ENCODE measurements at regions of chr11 and their contacts with region 1.

Region 1: GRCh38 chr11:118171269-118172062 is 5.0 kb downstream of the SCN2B start:
- DNase-seq: no peak
- H3K4me3 ChIP-seq: no peak overlapping the region
- H3K27me3 ChIP-seq: peaks cover 20% of the 10 kb centered on the region
- CTCF ChIP-seq: peak; percentile 93

Region 2: GRCh38 chr11:118145285-118146227 is 25.9 kb before region 1 on chr11:
- CTCF ChIA-PET with region 1: interaction called, 161 read pairs
- POLR2A ChIA-PET with region 1: interaction called, 4 read pairs
- DNase-seq: no peak
- H3K4me3 ChIP-seq: peak overlapping the region; percentile 36
- H3K27me3 ChIP-seq: peaks cover 26% of the 10 kb centered on the region
- CTCF ChIP-seq: peak; percentile 88

Region 3: GRCh38 chr11:118152552-118153471 is 18.7 kb before region 1 on chr11 and contains the start of gene SCN4B:
- CTCF ChIA-PET with region 1: interaction called, 161 read pairs
- POLR2A ChIA-PET with region 1: no interaction called
- DNase-seq: no peak
- H3K4me3 ChIP-seq: peak within 1 kb of the TSS; percentile 36
- H3K27me3 ChIP-seq: peaks cover 70% of the 10 kb centered on the region
- CTCF ChIP-seq: no peak
- polyA plus RNA-seq, gene SCN4B: 0.36 and 0.43 TPM in 2 replicates

Measured in BJ (cell line).